ENCODE measurements at regions of chr3 and their contacts with region 1.

Region 1: GRCh38 chr3:102229062-102229655 is 205.7 kb upstream of the ZPLD1 start:
- DNase-seq: peak; percentile 81
- H3K4me3 Mint-ChIP-seq: no peak overlapping the region
- H3K27ac Mint-ChIP-seq: no peak overlapping the region
- H3K4me1 Mint-ChIP-seq: peaks cover 21% of the 10 kb centered on the region
- H3K27me3 Mint-ChIP-seq: no peaks in the 10 kb centered on the region

Region 2: DNA sequence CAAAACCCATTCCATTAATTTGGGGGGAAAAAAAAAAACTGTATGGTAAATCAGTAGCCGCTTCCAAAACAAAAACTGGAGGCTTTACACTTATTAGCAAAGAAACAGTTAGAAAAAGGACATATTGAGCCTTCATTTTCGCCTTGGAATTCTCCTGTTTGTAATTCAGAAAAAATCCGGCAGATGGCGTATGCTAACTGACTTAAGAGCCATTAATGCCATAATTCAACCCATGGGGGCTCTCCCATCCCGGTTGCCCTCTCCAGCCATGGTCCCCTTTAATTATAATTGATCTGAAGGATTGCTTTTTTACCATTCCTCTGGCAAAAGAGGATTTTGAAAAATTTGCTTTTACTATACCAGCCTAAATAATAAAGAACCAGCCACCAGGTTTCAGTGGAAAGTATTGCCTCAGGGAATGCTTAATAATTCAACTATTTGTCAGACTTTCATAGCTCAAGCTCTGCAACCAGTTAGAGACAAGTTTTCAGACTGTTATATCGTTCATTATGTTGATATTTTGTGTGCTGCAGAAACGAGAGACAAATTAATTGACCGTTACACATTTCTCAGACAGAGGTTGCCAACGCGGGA is 533.3 kb before region 1 on chr3:
- CTCF ChIA-PET with region 1: interaction called, 12 read pairs
- DNase-seq: peak; percentile 41
- H3K4me3 Mint-ChIP-seq: no peak overlapping the region
- H3K27ac Mint-ChIP-seq: no peak overlapping the region
- H3K4me1 Mint-ChIP-seq: peaks cover 6% of the 10 kb centered on the region
- H3K27me3 Mint-ChIP-seq: no peaks in the 10 kb centered on the region

Region 3: DNA sequence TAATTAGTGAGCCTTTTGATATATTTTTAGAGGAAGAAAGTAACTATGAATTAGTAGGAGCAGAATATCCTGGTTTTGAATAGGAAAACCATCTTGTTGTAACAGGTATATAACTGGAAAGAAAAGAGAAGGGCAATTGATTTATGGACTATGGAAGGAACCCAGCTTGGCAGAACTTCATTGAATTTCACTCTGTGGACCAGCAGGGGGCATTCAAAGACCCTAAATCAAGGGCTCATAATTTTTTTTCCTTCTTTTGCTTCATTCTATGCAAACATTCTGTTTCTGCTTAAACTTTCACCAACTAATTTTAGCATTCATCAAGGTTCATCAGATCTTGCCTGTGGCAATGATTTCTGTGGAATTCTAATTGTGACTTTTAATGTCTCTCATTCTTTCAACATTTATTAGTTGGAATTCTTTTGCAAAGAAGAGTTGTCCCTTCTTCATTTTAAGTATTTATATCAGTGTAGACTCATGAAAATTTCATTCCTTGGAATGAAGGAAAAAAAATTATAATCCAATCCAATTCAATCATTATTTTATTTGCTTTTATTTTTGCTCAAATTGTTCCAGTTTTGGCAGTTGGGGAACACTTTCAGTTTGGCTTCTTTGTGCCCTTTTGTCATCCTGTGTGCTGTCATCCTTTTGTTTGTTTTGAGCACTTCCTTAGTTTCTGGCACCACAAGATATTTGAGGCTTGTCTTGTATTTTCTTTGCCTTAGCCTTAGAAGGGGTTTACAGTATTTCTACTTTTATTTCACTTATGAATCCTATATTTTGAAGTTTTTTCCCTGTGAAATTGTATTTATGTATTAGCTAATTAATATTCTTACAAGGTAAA is 419.8 kb before region 1 on chr3:
- CTCF ChIA-PET with region 1: interaction called, 321 read pairs
- DNase-seq: peak; percentile 44
- H3K4me3 Mint-ChIP-seq: no peak overlapping the region
- H3K27ac Mint-ChIP-seq: peak overlapping the region; percentile 26
- H3K4me1 Mint-ChIP-seq: peaks cover 48% of the 10 kb centered on the region
- H3K27me3 Mint-ChIP-seq: no peaks in the 10 kb centered on the region

Region 4: GRCh38 chr3:101849051-101849720 is 380.0 kb before region 1 on chr3 and contains the start of gene NFKBIZ:
- CTCF ChIA-PET with region 1: interaction called, 14 read pairs
- DNase-seq: peak; percentile 96
- H3K4me3 Mint-ChIP-seq: peak within 1 kb of the TSS; percentile 86
- H3K27ac Mint-ChIP-seq: peak within 1 kb of the TSS; percentile 97
- H3K4me1 Mint-ChIP-seq: peaks cover 45% of the 10 kb centered on the region
- H3K27me3 Mint-ChIP-seq: no peaks in the 10 kb centered on the region

Region 5: DNA sequence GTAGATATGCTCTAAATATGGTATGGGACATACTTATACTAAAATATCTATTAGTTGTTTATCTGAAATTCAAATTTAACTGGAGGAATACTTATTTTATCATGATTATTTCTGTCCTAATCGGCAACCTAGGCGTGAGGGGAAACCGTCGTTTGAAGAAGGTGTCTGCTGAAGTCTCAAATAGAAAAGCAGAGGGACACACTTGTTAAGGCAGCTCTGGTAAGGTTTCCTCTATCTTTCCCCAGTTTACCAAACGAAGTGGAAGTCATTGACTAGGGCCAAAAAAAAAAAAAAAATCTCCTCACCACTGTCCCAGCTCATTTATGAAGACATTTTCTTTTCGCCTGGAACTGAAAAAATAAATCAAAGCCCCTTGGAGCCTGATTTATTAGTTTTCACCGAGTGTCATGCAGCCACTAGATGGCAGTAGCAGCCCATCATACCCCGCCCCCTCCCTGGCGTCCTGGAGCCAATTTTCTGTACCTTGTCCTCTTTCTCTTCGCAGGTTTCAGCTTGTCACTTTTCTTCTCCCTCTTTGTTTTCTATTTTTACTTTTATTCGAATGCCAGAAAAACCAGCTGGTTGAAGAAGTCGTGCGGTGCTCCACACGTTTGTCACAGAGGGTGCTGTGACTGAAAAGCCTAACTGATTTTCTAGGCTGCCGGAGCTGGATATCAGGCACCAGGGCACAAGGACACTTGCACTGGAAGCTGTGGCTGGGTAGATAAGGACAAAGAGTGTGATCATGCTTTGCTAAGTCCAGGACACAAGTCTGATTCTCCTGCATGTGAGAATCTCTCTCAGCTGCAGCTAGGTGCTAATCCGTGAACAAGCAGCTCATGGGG is 444.3 kb after region 1 on chr3:
- CTCF ChIA-PET with region 1: interaction called, 17 read pairs
- DNase-seq: peak; percentile 73
- H3K4me3 Mint-ChIP-seq: no peak overlapping the region
- H3K27ac Mint-ChIP-seq: no peak overlapping the region
- H3K4me1 Mint-ChIP-seq: no peaks in the 10 kb centered on the region
- H3K27me3 Mint-ChIP-seq: peaks cover 5% of the 10 kb centered on the region

Measured in activated naive CD4-positive, alpha-beta T cell treated with anti-CD3 and anti-CD28 coated beads, Interleukin-2, amount 10 ng/mL, durations not matched to agents 7 days and 5 days (primary cell).